ENCODE measurements at regions of chr9 and their contacts with region 1.

Region 1: DNA sequence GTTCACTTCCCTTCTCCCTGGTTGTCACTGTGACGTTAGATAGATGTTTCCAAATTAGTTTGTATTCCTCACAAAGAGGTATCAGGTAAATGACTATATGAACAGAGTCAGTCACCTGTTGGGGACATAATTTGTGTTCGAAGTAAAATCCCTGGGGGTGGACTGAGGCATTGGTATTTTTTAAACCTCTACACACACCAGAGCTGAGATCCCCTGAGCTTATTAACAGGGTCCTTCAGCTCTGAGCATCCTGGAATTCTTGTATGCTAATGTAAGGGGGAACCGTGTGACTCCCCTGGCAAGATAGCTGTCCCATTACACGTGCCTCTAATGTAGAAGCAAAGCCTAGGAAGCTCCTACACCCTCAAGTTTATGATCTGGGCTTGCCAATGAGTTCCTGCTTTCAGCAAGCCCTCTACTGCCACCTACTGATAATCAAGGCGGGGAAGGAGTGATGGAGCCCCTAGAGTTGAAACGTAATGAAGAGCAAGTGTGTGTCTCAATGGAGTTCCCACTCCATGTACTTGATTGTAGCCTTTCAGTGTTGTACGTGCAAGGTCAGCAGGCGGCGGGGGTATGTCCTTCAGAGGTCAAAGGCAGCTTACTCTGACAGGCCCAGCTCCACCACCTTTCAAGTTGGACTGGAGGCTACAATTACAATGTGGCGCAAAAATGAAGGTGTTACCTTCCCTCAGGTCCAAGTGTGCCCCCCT is 14.4 kb downstream of the PRKACG start:
- DNase-seq: peak; percentile 22 to 78 (median 53)
- ATAC-seq: peak; percentile 73
- H3K4me3 ChIP-seq: no peak overlapping the region
- H3K4me3 Mint-ChIP-seq: no peak overlapping the region
- H3K27ac ChIP-seq: no peak overlapping the region
- H3K27ac Mint-ChIP-seq: no peak overlapping the region
- H3K4me1 ChIP-seq: peaks cover 6% of the 10 kb centered on the region
- H3K4me1 Mint-ChIP-seq: peaks cover 11% of the 10 kb centered on the region
- H3K27me3 ChIP-seq: no peaks in the 10 kb centered on the region
- H3K27me3 Mint-ChIP-seq: peaks cover 14% of the 10 kb centered on the region
- CTCF ChIP-seq: peak; percentile 65

Region 2: GRCh38 chr9:68584189-68585033 is 415.1 kb before region 1 on chr9:
- CTCF ChIA-PET with region 1: interaction called, 17 read pairs
- POLR2A ChIA-PET with region 1: no interaction called
- intact Hi-C with region 1: loop called in 1 of 2 experiments (anchors 1 kb)
- DNase-seq: peak; percentile 58 to 90 (median 77)
- ATAC-seq: peak; percentile 79
- H3K4me3 ChIP-seq: no peak overlapping the region
- H3K4me3 Mint-ChIP-seq: no peak overlapping the region
- H3K27ac ChIP-seq: no peak overlapping the region
- H3K27ac Mint-ChIP-seq: no peak overlapping the region
- H3K4me1 ChIP-seq: no peaks in the 10 kb centered on the region
- H3K4me1 Mint-ChIP-seq: peaks cover 2% of the 10 kb centered on the region
- H3K27me3 ChIP-seq: no peaks in the 10 kb centered on the region
- H3K27me3 Mint-ChIP-seq: peaks cover 8% of the 10 kb centered on the region
- CTCF ChIP-seq: peak; percentile 81

Region 3: GRCh38 chr9:68844631-68845612 is 154.6 kb before region 1 on chr9:
- CTCF ChIA-PET with region 1: no interaction called
- POLR2A ChIA-PET with region 1: no interaction called
- intact Hi-C with region 1: loop called in 1 of 2 experiments (anchors 1 kb)
- DNase-seq: peak in 5 of 9 experiments; percentile 17 to 51 (median 25)
- ATAC-seq: no peak
- H3K4me3 ChIP-seq: no peak overlapping the region
- H3K4me3 Mint-ChIP-seq: no peak overlapping the region
- H3K27ac ChIP-seq: no peak overlapping the region
- H3K27ac Mint-ChIP-seq: no peak overlapping the region
- H3K4me1 ChIP-seq: no peaks in the 10 kb centered on the region
- H3K4me1 Mint-ChIP-seq: no peaks in the 10 kb centered on the region
- H3K27me3 ChIP-seq: no peaks in the 10 kb centered on the region
- H3K27me3 Mint-ChIP-seq: peaks cover 1% of the 10 kb centered on the region
- CTCF ChIP-seq: peak; percentile 15

Region 4: DNA sequence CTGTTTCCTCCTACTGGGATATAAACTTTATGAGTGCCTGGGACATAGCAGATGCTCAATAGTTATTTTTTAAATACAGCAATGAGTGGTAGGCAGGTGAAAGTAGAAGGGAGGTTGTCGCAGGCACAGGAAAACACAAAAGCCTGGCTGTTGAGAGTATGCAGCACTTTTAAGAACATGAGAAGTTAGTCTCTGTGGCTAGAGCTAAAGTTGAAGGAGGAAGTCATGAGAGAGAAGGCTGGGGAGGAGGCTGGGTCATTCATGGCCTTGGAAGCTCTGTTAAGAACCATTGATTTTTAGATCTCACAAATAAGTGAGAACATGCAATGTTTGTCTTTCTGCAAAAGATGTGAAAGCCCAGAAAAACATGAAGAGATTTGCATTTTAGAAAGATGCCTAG is 112.3 kb before region 1 on chr9:
- CTCF ChIA-PET with region 1: interaction called, 3 read pairs
- POLR2A ChIA-PET with region 1: no interaction called
- intact Hi-C with region 1: loop called in 1 of 2 experiments (anchors 10 kb)
- DNase-seq: no peak
- ATAC-seq: no peak
- H3K4me3 ChIP-seq: no peak overlapping the region
- H3K4me3 Mint-ChIP-seq: no peak overlapping the region
- H3K27ac ChIP-seq: no peak overlapping the region
- H3K27ac Mint-ChIP-seq: peak overlapping the region; percentile 2
- H3K4me1 ChIP-seq: peaks cover 30% of the 10 kb centered on the region
- H3K4me1 Mint-ChIP-seq: peaks cover 17% of the 10 kb centered on the region
- H3K27me3 ChIP-seq: no peaks in the 10 kb centered on the region
- H3K27me3 Mint-ChIP-seq: peaks cover 10% of the 10 kb centered on the region
- CTCF ChIP-seq: no peak

Region 5: GRCh38 chr9:68904454-68904853 is 95.1 kb before region 1 on chr9:
- CTCF ChIA-PET with region 1: no interaction called
- POLR2A ChIA-PET with region 1: no interaction called
- intact Hi-C with region 1: loop called in 1 of 2 experiments (anchors 5 kb)
- DNase-seq: peak in 1 of 9 experiments; percentile 55
- ATAC-seq: no peak
- H3K4me3 ChIP-seq: no peak overlapping the region
- H3K4me3 Mint-ChIP-seq: no peak overlapping the region
- H3K27ac ChIP-seq: no peak overlapping the region
- H3K27ac Mint-ChIP-seq: no peak overlapping the region
- H3K4me1 ChIP-seq: no peaks in the 10 kb centered on the region
- H3K4me1 Mint-ChIP-seq: no peaks in the 10 kb centered on the region
- H3K27me3 ChIP-seq: no peaks in the 10 kb centered on the region
- H3K27me3 Mint-ChIP-seq: peaks cover 4% of the 10 kb centered on the region
- CTCF ChIP-seq: no peak

Region 6: DNA sequence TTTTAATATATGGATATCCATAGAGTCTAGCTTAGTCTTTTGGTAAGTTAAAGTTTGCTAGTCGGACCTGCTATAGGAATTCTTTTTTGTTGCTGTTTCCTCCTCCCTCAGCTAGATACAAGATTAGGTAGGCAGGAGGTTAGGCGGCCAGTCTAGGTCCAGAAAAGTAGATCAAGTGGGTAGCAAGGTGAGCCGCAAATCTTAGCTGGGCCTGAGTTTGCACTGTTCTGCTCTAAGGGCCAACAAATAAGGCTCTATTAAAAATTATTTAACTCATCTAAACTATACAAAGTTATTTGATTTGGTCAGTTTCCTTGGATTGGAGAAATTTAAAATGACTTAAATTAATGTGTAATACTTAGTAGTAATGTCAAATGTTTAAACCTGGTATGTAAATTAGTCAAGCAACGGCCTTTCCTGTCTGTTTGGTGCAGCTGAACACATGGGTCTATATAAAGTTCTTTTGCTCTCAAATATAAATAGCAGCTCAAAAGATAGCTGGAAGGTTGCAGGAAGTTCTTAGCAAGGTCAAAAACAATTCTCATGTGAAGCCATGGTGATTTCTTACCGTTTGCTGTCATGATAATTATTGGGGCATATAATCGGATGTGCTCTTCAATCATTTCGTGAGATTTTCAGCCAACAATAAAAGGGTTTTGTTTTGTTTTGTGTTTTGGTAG is 57.6 kb before region 1 on chr9:
- CTCF ChIA-PET with region 1: interaction called, 3 read pairs
- POLR2A ChIA-PET with region 1: no interaction called
- intact Hi-C with region 1: loop called in 1 of 2 experiments (anchors 5 kb)
- DNase-seq: no peak
- ATAC-seq: no peak
- H3K4me3 ChIP-seq: no peak overlapping the region
- H3K4me3 Mint-ChIP-seq: no peak overlapping the region
- H3K27ac ChIP-seq: no peak overlapping the region
- H3K27ac Mint-ChIP-seq: no peak overlapping the region
- H3K4me1 ChIP-seq: no peaks in the 10 kb centered on the region
- H3K4me1 Mint-ChIP-seq: no peaks in the 10 kb centered on the region
- H3K27me3 ChIP-seq: no peaks in the 10 kb centered on the region
- H3K27me3 Mint-ChIP-seq: peaks cover 10% of the 10 kb centered on the region
- CTCF ChIP-seq: no peak

Region 7: DNA sequence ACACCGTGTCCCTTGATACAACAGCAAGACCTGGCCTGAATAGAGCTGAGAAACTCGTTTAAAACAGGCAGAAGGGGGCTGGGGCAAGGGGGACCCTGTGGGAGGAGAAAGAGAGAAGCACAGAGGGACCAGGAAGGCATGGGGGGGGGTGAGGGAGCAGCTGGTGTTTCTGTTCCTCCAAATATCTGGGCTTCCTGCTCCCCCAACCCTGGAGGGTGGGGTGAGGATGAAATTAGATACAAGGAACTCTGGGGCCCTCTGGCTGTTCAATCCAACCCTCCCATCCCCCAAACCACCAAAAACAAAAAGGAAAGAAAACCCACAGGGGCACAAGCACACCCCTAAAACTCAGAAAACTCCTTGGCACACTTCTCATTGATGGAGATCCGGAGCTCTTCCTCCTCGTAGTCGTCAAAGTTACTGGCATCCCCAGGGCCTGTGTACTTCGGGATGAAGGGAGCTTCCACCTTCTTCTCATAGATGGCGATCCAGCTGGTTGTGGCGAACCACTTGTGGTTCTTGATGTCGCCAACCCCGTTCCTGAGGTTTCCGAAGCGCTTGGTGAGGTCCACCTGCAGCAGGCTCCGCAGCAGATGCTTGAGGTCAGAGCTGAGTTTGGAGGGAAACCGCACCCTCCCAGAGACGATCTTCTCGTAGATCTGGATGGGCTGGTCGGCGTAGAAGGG is 13.3 kb after region 1 on chr9:
- CTCF ChIA-PET with region 1: interaction called, 11 read pairs
- POLR2A ChIA-PET with region 1: no interaction called
- intact Hi-C with region 1: loop called in 1 of 2 experiments (anchors 1 kb)
- DNase-seq: no peak
- ATAC-seq: no peak
- H3K4me3 ChIP-seq: no peak overlapping the region
- H3K4me3 Mint-ChIP-seq: no peak overlapping the region
- H3K27ac ChIP-seq: no peak overlapping the region
- H3K27ac Mint-ChIP-seq: no peak overlapping the region
- H3K4me1 ChIP-seq: no peaks in the 10 kb centered on the region
- H3K4me1 Mint-ChIP-seq: peaks cover 6% of the 10 kb centered on the region
- H3K27me3 ChIP-seq: peaks cover 0 to 3% of the 10 kb centered on the region in 2 experiments
- H3K27me3 Mint-ChIP-seq: peaks cover 14% of the 10 kb centered on the region
- CTCF ChIP-seq: no peak

Region 8: DNA sequence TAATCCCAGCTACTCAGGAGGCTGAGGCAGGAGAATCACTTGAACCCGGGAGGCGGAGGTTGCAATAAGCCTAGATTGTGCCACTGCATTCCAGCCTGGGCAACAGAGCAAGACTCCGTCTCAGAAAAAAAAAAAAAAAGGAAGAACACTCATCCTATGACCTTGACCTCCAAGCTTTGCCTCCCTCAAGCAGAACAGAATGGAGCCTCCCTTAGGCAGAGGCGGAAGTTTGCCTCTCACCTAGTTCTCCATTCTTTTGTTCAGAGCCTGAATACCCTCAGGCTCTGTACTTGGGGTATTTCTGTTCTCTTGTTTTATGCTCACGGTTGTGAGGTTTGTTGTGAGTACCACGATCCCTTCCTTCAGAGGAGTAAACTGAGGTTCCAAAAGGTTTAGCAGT is 42.6 kb after region 1 on chr9:
- CTCF ChIA-PET with region 1: no interaction called
- POLR2A ChIA-PET with region 1: no interaction called
- intact Hi-C with region 1: no loop called
- DNase-seq: no peak
- ATAC-seq: no peak
- H3K4me3 ChIP-seq: no peak overlapping the region
- H3K4me3 Mint-ChIP-seq: no peak overlapping the region
- H3K27ac ChIP-seq: no peak overlapping the region
- H3K27ac Mint-ChIP-seq: no peak overlapping the region
- H3K4me1 ChIP-seq: peaks cover 7% of the 10 kb centered on the region
- H3K4me1 Mint-ChIP-seq: peaks cover 40% of the 10 kb centered on the region
- H3K27me3 ChIP-seq: no peaks in the 10 kb centered on the region
- H3K27me3 Mint-ChIP-seq: no peaks in the 10 kb centered on the region
- CTCF ChIP-seq: no peak

Region 9: GRCh38 chr9:69097064-69097463 is 97.5 kb after region 1 on chr9:
- CTCF ChIA-PET with region 1: no interaction called
- POLR2A ChIA-PET with region 1: no interaction called
- intact Hi-C with region 1: no loop called
- DNase-seq: no peak
- ATAC-seq: no peak
- H3K4me3 ChIP-seq: no peak overlapping the region
- H3K4me3 Mint-ChIP-seq: no peak overlapping the region
- H3K27ac ChIP-seq: no peak overlapping the region
- H3K27ac Mint-ChIP-seq: no peak overlapping the region
- H3K4me1 ChIP-seq: no peaks in the 10 kb centered on the region
- H3K4me1 Mint-ChIP-seq: no peaks in the 10 kb centered on the region
- H3K27me3 ChIP-seq: no peaks in the 10 kb centered on the region
- H3K27me3 Mint-ChIP-seq: no peaks in the 10 kb centered on the region
- CTCF ChIP-seq: no peak

Measured in CD8-positive, alpha-beta T cell (primary cell).